Activated B cell treated with CpG ODN at 0.5 μM for 24 hours (primary cell): ENCODE measurements at regions of chr17 and their contacts with region 1.

Region 1: DNA sequence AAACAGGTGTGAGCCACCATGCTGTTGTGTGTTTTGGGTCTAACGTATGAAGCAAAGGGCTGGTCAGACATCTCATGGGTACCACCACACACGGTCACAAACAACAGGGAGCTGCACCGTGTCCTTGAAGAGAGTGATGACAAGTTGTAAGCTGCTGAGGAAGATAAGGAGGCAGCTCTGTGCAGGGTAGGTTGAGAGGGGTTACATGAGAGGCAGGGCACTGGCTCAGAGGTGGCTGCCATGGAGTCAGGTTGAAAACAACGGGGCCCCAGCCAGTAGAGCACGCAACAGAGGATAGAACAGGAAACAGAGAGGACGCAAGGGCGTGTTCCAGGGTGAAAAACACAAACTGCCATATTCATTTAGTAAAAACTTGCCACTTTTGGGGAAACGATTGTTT is 52.2 kb downstream of the TRARG1 start:
- DNase-seq: no peak
- ATAC-seq: no peak
- H3K4me3 Mint-ChIP-seq: peak overlapping the region; percentile 8
- H3K27ac Mint-ChIP-seq: no peak overlapping the region
- H3K4me1 Mint-ChIP-seq: peaks cover 12% of the 10 kb centered on the region
- H3K27me3 Mint-ChIP-seq: no peaks in the 10 kb centered on the region
- CTCF ChIP-seq: no peak

Region 2: GRCh38 chr17:1055751-1056645 is 275.7 kb before region 1 on chr17:
- CTCF ChIA-PET with region 1: interaction called, 4 read pairs
- POLR2A ChIA-PET with region 1: no interaction called
- intact Hi-C with region 1: loop called (anchors 5 kb)
- DNase-seq: peak; percentile 30
- ATAC-seq: peak; percentile 64
- H3K4me3 Mint-ChIP-seq: no peak overlapping the region
- H3K27ac Mint-ChIP-seq: no peak overlapping the region
- H3K4me1 Mint-ChIP-seq: peaks cover 2% of the 10 kb centered on the region
- H3K27me3 Mint-ChIP-seq: no peaks in the 10 kb centered on the region
- CTCF ChIP-seq: peak; percentile 33

Region 3: DNA sequence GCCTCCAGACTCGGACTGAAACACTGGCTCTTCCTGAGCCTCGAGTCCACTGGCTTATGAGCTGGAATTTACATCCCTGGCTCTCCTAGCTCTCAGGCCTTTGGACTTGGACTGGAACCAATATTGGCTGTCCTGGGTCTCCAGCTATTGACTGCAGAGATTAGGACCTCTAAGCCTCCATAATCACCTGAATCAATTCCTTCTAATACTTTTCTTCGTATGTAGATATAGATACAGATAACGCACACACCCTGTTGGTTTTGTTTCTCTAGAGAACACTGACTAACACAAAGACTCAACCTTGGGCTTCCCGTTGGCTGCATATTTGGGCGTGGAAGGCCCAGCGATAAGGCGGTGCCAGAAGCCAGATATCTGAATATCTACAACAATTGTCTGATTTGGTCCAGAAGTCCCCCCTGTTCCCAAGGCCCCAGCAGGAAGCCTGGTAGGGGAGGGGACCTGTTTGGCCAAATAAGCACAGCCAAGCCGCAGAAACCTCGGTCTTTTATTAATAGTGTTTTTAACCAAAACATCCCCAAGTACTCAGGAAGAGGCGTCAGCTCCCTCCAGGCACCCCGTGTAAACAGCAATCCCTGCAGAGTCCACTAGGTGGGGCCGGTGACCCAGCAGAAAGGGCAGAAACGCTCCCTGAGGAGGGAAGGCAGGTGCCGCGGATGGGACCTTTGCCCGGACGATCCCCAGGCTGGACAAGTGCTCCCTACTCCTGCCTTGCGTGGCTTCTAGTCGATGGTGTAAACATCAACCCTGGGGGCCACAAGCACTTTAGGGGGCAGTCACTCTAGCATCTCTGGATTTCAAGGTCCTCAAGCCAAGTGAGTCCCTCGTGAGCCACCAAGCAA is 208.9 kb before region 1 on chr17:
- CTCF ChIA-PET with region 1: interaction called, 21 read pairs
- POLR2A ChIA-PET with region 1: interaction called, 3 read pairs
- intact Hi-C with region 1: loop called (anchors 2 kb)
- DNase-seq: peak; percentile 74
- ATAC-seq: peak; percentile 97
- H3K4me3 Mint-ChIP-seq: no peak overlapping the region
- H3K27ac Mint-ChIP-seq: no peak overlapping the region
- H3K4me1 Mint-ChIP-seq: peaks cover 13% of the 10 kb centered on the region
- H3K27me3 Mint-ChIP-seq: no peaks in the 10 kb centered on the region
- CTCF ChIP-seq: no peak

Region 4: DNA sequence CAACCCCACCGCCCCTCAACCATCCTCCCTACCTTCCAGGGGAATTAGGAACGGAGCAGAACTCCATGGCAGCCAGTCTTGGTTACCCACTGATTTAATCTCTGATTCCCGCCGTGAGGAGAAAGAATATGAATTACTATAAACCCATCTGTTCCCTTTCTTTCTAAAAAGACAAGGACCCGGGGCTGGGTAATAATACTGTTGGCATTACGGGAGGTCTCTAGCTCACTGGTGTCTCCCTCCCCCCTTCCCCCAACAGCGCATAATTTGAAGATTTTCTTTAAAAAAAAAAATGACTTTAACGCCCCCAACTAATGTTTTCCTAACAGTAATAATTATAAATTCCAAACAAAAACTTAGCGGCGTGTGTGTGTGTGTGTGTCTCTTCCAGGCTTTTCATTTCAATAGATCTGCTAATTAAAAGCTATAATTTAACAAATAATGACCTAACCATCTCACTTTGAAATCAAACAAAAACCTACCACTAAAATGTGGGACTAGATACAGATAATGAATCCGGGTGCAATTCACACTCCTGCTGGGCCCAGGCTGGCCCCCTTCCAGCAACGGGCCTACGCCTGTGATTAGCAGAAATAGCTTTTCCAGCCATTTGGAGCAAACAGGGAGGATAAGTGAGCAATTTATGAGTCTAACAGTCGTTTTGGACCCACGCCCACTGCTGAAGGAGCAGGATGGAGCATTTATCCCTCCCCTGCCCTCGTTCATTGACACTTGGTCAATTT is 79.7 kb before region 1 on chr17:
- CTCF ChIA-PET with region 1: interaction called, 11 read pairs
- POLR2A ChIA-PET with region 1: no interaction called
- intact Hi-C with region 1: no loop called
- DNase-seq: no peak
- ATAC-seq: no peak
- H3K4me3 Mint-ChIP-seq: no peak overlapping the region
- H3K27ac Mint-ChIP-seq: no peak overlapping the region
- H3K4me1 Mint-ChIP-seq: peaks cover 3% of the 10 kb centered on the region
- H3K27me3 Mint-ChIP-seq: peaks cover 14% of the 10 kb centered on the region
- CTCF ChIP-seq: no peak

Region 5: DNA sequence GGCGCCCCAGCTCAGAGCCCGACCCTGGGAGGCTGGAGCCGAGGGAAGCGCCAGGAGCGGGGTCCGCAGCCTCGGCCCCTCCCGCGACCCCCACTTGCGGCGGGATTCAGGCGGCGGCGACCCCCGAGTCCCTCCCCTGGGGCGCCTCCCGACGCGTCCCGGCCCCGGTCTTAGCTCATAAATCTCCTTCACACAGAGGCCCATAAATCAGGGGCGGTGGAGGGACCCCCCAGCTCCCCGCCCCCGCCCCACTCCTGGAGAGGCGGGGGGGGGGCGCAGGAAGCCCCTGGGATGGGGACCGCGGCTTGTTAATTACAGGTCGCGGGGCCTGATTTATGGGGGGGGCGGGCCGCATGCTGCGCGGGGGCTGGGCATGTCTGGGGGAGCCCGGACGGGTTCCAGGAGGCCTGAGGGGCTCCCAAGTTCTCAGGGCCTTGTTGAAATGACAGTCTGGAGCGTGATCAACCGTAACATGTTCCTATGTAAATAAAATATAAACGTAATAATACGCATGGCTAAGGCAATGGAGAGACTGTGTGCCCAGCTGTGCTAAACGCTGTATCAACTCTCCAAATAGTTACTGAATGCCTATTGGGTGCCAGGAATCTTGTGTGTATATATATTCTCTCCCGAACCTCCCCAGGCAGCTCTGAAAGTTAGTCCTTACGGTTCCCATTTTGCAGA is 71.5 kb before region 1 on chr17:
- CTCF ChIA-PET with region 1: interaction called, 11 read pairs
- POLR2A ChIA-PET with region 1: no interaction called
- intact Hi-C with region 1: loop called (anchors 1 kb)
- DNase-seq: no peak
- ATAC-seq: no peak
- H3K4me3 Mint-ChIP-seq: peak overlapping the region; percentile 41
- H3K27ac Mint-ChIP-seq: no peak overlapping the region
- H3K4me1 Mint-ChIP-seq: peaks cover 16% of the 10 kb centered on the region
- H3K27me3 Mint-ChIP-seq: peaks cover 16% of the 10 kb centered on the region
- CTCF ChIP-seq: no peak

Region 6: GRCh38 chr17:1275962-1276736 is 55.6 kb before region 1 on chr17:
- CTCF ChIA-PET with region 1: interaction called, 5 read pairs
- POLR2A ChIA-PET with region 1: no interaction called
- intact Hi-C with region 1: loop called (anchors 1 kb)
- DNase-seq: peak; percentile 65
- ATAC-seq: peak; percentile 87
- H3K4me3 Mint-ChIP-seq: peak overlapping the region; percentile 65
- H3K27ac Mint-ChIP-seq: no peak overlapping the region
- H3K4me1 Mint-ChIP-seq: peaks cover 12% of the 10 kb centered on the region
- H3K27me3 Mint-ChIP-seq: peaks cover 8% of the 10 kb centered on the region
- CTCF ChIP-seq: peak; percentile 16